ENCODE measurements at regions of chr5 and their contacts with region 1.

Region 1: GRCh38 chr5:52909192-52909591 is 80.0 kb upstream of the ITGA2 start:
- DNase-seq: no peak
- ATAC-seq: peak in 3 of 4 donors; percentile 58 to 80 (median 73)
- H3K4me3 ChIP-seq: no peak overlapping the region
- H3K27ac ChIP-seq: peak overlapping the region in 10 of 12 donors; percentile 8 to 61 (median 45)
- H3K4me1 ChIP-seq: peaks cover 0 to 30% (median 14%) of the 10 kb centered on the region in 12 donors
- H3K27me3 ChIP-seq: no peaks in the 10 kb centered on the region
- CTCF ChIP-seq: no peak
- POLR2A ChIP-seq: no peak

Region 2: GRCh38 chr5:52702877-52703276 is 206.3 kb before region 1 on chr5:
- intact Hi-C with region 1: loop called in 2 of 10 experiments (anchors 5 to 10 kb)
- DNase-seq: no peak
- ATAC-seq: peak in 1 of 4 donors; percentile 77
- H3K4me3 ChIP-seq: no peak overlapping the region
- H3K27ac ChIP-seq: peak overlapping the region in 7 of 12 donors; percentile 5 to 54 (median 28)
- H3K4me1 ChIP-seq: peaks cover 0 to 25% (median 4%) of the 10 kb centered on the region in 12 donors
- H3K27me3 ChIP-seq: no peaks in the 10 kb centered on the region
- CTCF ChIP-seq: no peak
- POLR2A ChIP-seq: no peak

Region 3: GRCh38 chr5:52794519-52794918 is 114.7 kb before region 1 on chr5:
- intact Hi-C with region 1: loop called in 1 of 10 experiments (anchors 5 kb)
- DNase-seq: no peak
- ATAC-seq: no peak
- H3K4me3 ChIP-seq: no peak overlapping the region
- H3K27ac ChIP-seq: peak overlapping the region in 1 of 12 donors; percentile 96
- H3K4me1 ChIP-seq: peaks cover 2 to 72% (median 30%) of the 10 kb centered on the region in 12 donors
- H3K27me3 ChIP-seq: no peaks in the 10 kb centered on the region
- CTCF ChIP-seq: no peak
- POLR2A ChIP-seq: no peak